ENCODE measurements at regions of chr21 and their contacts with region 1.

Region 1: DNA sequence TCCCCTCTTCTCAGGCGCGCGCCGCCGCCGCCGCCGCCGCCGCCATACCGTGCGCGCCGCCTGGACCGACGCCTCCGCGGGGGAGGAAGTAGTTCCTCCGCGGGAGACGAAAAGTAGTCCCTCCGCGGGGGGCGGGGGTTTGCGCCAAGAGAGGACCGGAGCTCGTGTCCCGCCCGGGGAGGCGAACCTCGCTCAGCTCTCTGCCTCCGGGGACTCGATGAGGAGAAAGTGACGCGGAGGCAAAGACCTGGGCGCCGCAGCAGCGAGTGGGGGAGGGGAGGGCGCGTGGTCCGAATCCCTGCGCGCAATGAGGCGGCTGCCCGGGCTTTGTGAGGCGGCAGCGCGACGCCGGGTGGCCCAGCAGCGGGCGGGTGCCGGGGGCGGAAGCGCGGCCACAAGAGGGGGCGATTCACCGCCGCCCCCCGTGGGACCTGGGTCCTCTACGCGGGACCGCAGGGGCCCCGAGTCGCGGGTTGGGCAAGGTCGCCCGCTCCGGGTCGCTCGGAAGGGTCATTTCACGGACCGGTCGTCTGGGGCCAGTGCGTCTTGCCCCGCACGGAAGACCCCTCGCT is at the start of gene BRWD1:
- DNase-seq: peak; percentile 61 to 96 (median 71)

Region 2: DNA sequence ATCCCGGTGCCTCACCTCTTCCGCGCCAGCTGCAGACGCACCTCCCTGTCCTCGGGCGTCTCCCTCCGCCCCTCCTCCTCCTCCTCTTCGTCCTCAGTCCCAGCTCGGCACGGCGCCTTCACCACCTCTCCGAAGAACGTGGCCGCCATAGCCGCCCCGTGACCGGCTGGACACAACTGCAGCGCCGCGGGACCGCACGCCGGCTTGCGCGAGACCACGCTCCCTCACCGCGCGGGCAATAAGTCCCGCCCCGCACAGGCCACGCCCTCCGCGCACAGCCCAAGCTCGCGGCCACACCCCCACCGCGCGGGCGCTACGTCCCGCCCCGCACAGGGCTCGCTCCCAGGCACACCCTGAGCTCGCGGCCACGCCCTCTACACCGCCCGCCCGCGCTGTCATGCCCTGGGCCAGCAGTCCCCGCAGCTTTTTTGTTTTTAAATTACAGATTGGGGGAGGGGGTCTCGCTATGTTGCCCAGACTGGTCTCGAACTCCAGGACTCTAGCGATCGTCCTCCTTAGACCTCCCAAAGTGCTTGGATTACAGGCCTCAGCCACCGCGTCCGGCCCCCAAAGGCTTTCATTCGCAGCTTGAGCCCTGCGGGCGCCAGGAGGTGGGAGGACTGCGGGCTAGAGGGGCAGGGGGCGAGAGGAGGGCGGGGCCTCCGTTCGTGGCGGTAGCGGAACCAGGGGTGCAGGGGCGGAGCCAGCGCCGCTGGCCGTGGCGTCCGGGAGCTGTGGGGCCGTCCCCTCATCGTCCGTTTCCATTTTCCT is 130.2 kb before region 1 on chr21 and contains the start of gene PSMG1:
- intact Hi-C with region 1: loop called (anchors 2 kb)
- DNase-seq: peak; percentile 82 to 99 (median 90)

Region 3: DNA sequence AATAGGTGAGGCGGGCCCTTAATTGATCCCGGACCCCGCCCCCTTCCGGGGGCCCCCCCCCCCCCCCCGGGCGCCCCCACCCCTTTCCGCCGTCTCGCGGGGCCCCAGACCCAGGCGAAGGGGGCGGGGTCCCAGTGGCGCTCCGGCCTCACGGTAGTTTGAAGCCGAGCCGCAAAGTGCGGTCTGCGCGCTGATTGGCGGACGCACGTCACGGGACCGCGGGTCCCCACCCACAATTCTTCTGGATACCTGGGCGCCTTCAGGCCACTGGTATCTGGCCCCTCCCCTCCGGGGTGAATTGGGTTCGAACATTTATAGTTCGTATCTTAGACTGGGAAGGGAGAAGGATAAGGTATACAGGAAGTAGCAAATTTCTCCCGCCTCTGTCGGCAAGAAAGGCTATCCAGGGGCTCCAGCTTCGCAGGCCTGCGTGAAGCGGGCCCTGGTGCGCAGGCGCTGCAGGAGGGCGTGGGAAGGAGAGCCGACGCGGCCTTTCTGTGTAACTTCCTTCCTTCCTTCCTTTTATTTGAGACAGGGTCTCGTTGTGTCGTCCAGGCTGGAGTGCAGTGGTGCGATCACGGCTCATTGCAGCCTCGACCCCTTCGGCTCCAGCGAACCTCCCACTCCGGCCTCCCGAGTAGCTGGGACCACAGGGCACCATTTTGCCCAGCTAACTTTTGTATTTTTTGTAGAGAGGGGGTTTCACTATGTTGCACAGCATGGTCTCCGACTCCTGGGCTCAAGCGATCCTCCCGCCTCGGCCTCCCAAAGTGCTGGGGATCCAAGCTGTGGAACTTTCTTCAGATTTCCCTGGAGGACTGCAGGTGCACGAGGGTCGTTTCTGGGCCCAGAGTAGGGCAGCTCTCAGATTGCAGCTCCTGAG is 35.8 kb after region 1 on chr21:
- intact Hi-C with region 1: loop called (anchors 2 kb)
- DNase-seq: peak; percentile 94 to 99 (median 96)

Region 4: GRCh38 chr21:39445321-39446269 is 131.9 kb after region 1 on chr21 and contains the start of gene LCA5L:
- intact Hi-C with region 1: loop called (anchors 5 kb)
- DNase-seq: peak; percentile 73 to 97 (median 80)

Region 5: GRCh38 chr21:39502631-39503030 is 189.0 kb after region 1 on chr21:
- intact Hi-C with region 1: no loop called
- DNase-seq: peak in 9 of 10 donors; percentile 31 to 91 (median 54)